Activated CD4-positive, alpha-beta memory T cell treated with anti-CD3 and anti-CD28 coated beads, Interleukin-2, amount 10 ng/mL, durations not matched to agents 7 days and 5 days (primary cell): ENCODE measurements at regions of chr22 and their contacts with region 1.

Region 1: DNA sequence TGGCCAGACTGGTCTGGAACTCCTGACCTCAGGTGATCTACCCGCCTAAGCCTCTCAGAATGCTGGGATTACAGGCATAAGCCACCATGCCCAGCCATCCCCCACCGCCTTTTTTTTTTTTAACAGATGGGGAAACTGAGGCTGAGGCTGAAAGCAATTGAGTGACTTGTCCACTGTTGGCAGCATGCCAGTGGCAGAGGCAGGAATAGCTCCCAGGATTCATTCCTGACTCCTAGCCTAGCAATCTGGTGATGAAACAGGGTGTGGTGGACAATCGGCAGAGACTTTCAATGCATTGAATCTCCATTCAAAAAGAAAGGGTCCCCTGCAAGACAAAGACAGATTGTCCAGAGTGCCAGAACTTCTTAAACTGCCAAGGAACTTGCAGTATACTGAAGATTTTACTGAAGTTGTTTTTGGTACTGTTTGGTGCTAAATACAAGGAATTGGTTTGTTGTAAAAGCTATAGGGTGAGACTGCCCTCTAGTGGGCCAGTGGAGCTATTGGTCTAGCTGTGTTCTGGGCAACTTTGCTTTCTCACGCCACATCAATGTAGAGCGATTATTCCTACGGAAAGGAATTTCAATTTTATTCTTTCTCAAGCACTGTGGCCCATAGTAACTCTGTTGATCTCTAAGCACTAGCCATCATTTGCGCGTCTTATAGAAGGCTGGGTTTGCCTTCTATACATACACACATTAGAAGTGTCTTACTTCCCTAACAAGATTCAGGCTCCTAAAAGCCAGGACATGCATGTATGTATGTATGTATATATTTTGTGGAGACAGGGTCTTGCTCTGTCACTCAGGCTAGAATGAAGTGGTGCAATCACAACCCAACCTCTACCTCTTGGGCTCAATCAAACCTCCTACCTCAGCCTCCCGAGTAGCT is 21.0 kb downstream of the C22orf31 start:
- DNase-seq: peak; percentile 62
- H3K4me3 Mint-ChIP-seq: no peak overlapping the region
- H3K27ac Mint-ChIP-seq: no peak overlapping the region
- H3K4me1 Mint-ChIP-seq: no peaks in the 10 kb centered on the region
- H3K27me3 Mint-ChIP-seq: peaks cover 5% of the 10 kb centered on the region

Region 2: GRCh38 chr22:28600546-28601143 is 440.0 kb before region 1 on chr22:
- CTCF ChIA-PET with region 1: interaction called, 23 read pairs
- POLR2A ChIA-PET with region 1: interaction called, 4 read pairs
- DNase-seq: no peak
- H3K4me3 Mint-ChIP-seq: no peak overlapping the region
- H3K27ac Mint-ChIP-seq: no peak overlapping the region
- H3K4me1 Mint-ChIP-seq: no peaks in the 10 kb centered on the region
- H3K27me3 Mint-ChIP-seq: peaks cover 35% of the 10 kb centered on the region

Region 3: DNA sequence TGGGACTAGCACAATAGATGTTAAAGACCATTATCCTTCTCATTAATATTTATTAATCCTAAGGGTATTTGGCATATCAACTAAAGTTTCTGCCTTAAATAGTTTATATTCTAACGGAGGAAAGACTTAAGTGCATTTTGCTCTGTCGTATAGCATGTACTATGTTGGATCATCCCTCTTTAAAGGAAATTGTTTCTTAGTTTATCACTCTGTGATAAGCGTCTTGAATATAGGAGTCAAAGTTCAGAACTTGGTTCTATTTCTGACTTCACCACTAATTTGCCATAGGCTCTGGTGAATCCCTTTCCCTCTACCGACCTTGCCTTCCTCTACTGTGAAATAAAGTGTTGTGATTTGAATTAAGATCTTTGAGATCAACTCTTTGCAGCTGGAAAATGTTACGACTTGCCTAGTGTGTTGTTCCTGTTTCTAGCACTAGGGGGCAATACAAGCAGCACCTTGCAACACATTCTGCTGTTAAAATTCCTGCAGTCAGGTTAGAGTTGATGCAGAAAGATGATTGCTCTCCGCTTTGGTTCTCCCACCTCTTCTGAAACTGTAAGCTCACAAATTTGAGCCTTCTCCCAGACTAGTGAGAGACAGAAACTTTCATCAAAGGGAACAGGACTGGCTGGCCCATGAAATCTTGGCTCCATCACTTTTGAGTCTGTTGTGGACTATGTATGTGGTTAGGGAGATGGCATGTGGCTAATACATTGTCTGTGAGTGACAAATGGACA is 185.1 kb before region 1 on chr22:
- CTCF ChIA-PET with region 1: interaction called, 42 read pairs
- POLR2A ChIA-PET with region 1: no interaction called
- DNase-seq: peak; percentile 33
- H3K4me3 Mint-ChIP-seq: no peak overlapping the region
- H3K27ac Mint-ChIP-seq: no peak overlapping the region
- H3K4me1 Mint-ChIP-seq: no peaks in the 10 kb centered on the region
- H3K27me3 Mint-ChIP-seq: peaks cover 10% of the 10 kb centered on the region

Region 4: GRCh38 chr22:28935713-28936112 is 104.9 kb before region 1 on chr22:
- CTCF ChIA-PET with region 1: no interaction called
- POLR2A ChIA-PET with region 1: no interaction called
- DNase-seq: no peak
- H3K4me3 Mint-ChIP-seq: no peak overlapping the region
- H3K27ac Mint-ChIP-seq: no peak overlapping the region
- H3K4me1 Mint-ChIP-seq: no peaks in the 10 kb centered on the region
- H3K27me3 Mint-ChIP-seq: peaks cover 74% of the 10 kb centered on the region

Region 5: GRCh38 chr22:29245637-29246385 is 205.2 kb after region 1 on chr22:
- CTCF ChIA-PET with region 1: interaction called, 18 read pairs
- POLR2A ChIA-PET with region 1: no interaction called
- DNase-seq: peak; percentile 75
- H3K4me3 Mint-ChIP-seq: no peak overlapping the region
- H3K27ac Mint-ChIP-seq: no peak overlapping the region
- H3K4me1 Mint-ChIP-seq: peaks cover 1% of the 10 kb centered on the region
- H3K27me3 Mint-ChIP-seq: peaks cover 20% of the 10 kb centered on the region